GM13976 (cell line): ENCODE measurements at regions of chr17 and their contacts with region 1.

Region 1: GRCh38 chr17:6421700-6422604 is 13.0 kb downstream of the AIPL1 start:
- DNase-seq: peak; percentile 88
- CTCF ChIP-seq: peak; percentile 79

Region 2: DNA sequence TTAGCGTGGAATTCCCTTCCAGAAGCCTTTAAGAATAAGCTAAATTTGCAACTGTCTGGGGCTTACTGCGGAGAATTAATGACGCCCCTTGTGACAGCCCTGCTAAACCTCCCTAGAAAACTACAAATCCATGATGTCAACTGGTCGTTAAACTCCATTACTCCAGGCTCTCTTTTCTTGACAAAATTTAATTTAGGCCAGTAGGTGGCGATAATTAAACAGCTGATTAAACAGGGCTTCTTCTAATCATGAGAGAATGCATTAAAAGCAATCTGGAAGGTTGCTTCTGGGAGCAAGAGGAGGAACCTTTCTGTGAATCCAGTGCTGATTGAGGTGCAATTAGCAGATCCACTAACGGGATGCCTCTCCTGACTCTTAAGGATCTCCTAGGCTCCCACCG is 829.6 kb before region 1 on chr17:
- in situ Hi-C with region 1: loop called (anchors 10 kb)
- DNase-seq: peak; percentile 59
- CTCF ChIP-seq: peak; percentile 41

Region 3: DNA sequence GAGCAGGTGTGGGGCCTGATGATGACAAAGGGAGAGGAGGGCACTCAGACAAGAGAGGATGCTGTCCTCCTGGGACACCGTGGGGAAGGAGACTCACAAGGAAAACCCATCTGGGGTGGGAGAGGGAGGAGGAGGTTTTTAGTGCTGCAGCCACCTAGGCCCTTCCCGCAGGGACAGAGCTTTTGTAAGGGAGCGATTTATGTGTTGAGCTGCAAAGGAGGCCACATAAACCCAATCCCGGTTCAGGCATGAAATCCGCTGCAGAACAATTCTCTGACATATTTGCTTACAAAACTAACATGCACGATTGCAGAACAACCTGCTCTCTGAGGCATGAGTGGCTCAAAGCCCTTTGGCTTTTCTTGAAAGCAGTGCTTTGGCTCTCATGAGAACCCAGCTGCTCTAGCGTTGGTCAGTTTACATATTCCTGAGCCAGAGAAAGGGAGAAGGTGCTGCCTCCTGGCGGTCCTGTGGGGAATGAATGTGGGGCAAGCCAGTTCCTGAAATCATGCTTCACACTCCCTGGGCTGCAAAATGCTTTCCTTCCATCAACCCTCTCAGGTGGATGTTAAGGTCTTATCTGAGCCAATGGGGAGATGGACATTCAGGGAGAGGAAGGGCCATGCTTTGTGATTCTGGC is 715.3 kb before region 1 on chr17:
- in situ Hi-C with region 1: loop called (anchors 25 kb)
- DNase-seq: peak; percentile 72
- CTCF ChIP-seq: peak; percentile 53

Region 4: GRCh38 chr17:6313835-6314234 is 108.1 kb before region 1 on chr17:
- in situ Hi-C with region 1: no loop called
- DNase-seq: no peak
- CTCF ChIP-seq: no peak